Heart left ventricle (tissue), 16 donors: ENCODE measurements at regions of chr4 and their contacts with region 1.

Region 1: GRCh38 chr4:139509727-139510410 is 46.1 kb downstream of the SETD7 start:
- DNase-seq: peak in 2 of 5 donors; percentile 27 to 40
- ATAC-seq: peak; percentile 52 to 72 (median 70)
- H3K4me3 ChIP-seq: no peak overlapping the region
- H3K27ac ChIP-seq: peak overlapping the region in 3 of 12 donors; percentile 6 to 47 (median 29)
- H3K4me1 ChIP-seq: peaks cover 0 to 22% (median 8%) of the 10 kb centered on the region in 12 donors
- H3K27me3 ChIP-seq: no peaks in the 10 kb centered on the region
- CTCF ChIP-seq: peak; percentile 22 to 63 (median 48)
- POLR2A ChIP-seq: no peak

Region 2: DNA sequence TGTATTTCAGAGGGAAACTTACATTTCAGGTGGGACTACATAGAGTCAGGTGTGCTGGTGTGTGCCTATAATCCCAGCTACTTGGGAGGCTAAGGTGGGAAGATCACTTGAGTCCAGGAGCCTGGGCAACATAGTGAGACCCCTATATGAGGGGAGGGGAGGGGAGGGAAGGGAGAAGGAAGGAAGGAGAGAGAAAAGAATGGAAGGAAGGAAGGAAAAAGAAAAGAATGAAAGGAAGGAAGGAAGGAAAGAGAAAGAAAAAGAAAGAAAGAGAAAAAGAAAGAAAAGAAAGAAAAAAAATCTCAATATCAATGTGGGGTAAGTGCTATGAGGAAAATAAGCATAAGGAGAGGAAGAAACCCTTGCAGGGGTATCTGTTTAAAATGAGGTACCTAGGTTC is 99.6 kb before region 1 on chr4:
- intact Hi-C with region 1: loop called in 3 of 10 experiments (anchors 5 to 10 kb)
- DNase-seq: no peak
- ATAC-seq: no peak
- H3K4me3 ChIP-seq: no peak overlapping the region
- H3K27ac ChIP-seq: no peak overlapping the region
- H3K4me1 ChIP-seq: no peaks in the 10 kb centered on the region
- H3K27me3 ChIP-seq: no peaks in the 10 kb centered on the region
- CTCF ChIP-seq: no peak
- POLR2A ChIP-seq: no peak

Region 3: GRCh38 chr4:139416073-139416673 is 93.7 kb before region 1 on chr4:
- intact Hi-C with region 1: loop called in 4 of 10 experiments (anchors 1 to 10 kb)
- DNase-seq: no peak
- ATAC-seq: peak in 1 of 4 donors; percentile 36
- H3K4me3 ChIP-seq: no peak overlapping the region
- H3K27ac ChIP-seq: no peak overlapping the region
- H3K4me1 ChIP-seq: peaks cover 0 to 18% (median 5%) of the 10 kb centered on the region in 12 donors
- H3K27me3 ChIP-seq: no peaks in the 10 kb centered on the region
- CTCF ChIP-seq: peak; percentile 60 to 84 (median 72)
- POLR2A ChIP-seq: no peak

Region 4: DNA sequence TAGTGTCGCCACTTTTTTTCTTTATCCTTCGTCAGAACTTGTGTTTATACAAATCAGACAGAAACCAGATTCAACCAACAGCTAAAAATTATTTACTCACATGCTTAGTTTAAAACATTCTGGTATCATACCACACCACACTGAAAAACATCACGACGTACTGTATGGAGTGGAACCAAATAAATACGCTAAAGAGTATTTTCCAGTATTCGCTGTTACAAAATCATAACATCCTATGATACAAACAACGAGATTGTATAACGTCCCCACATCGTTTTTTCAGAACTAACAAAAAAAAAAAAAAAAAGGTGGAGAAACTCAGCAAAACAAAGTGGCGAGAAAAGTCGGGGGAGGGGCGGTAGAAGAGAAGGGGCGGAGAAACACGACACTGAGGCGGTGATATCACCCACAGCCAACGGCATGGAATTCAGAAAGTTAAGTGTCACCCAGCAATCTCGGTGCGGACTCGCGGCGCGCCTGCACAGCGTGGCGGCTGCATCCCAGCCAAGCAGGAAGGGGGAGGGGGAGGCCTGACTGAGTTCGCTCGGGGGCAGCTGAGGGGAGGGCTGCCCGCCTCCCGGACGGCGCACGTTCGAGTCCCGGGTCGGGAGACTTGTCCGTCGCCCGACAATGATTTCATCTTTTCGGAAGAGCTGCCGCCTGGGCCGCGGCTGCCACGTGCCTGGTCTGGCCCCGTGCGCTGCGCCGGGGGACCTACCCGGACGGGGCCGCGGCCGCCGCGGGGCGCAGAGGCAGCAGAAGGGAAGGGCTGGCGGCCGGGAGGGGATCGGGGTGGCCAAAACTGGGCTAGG is 45.2 kb after region 1 on chr4:
- intact Hi-C with region 1: loop called in 1 of 10 experiments (anchors 5 kb)
- DNase-seq: peak; percentile 93 to 95 (median 94)
- ATAC-seq: peak; percentile 79 to 85 (median 81)
- H3K4me3 ChIP-seq: peak overlapping the region; percentile 72 to 97 (median 93)
- H3K27ac ChIP-seq: peak overlapping the region; percentile 91 to 99 (median 97)
- H3K4me1 ChIP-seq: peaks cover 0 to 76% (median 53%) of the 10 kb centered on the region in 12 donors
- H3K27me3 ChIP-seq: no peaks in the 10 kb centered on the region
- CTCF ChIP-seq: no peak
- POLR2A ChIP-seq: peak in 1 of 2 donors; percentile 78